ENCODE measurements at regions of chr12 and their contacts with region 1.

Region 1: GRCh38 chr12:130053651-130054069 is 108.6 kb upstream of the FZD10 start:
- DNase-seq: no peak
- H3K4me3 ChIP-seq: no peak overlapping the region
- H3K4me1 ChIP-seq: no peaks in the 10 kb centered on the region
- H3K27me3 ChIP-seq: no peaks in the 10 kb centered on the region

Region 2: GRCh38 chr12:130335517-130336392 is 282.1 kb after region 1 on chr12:
- in situ Hi-C with region 1: loop called (anchors 5 kb)
- DNase-seq: peak; percentile 49 to 65
- H3K4me3 ChIP-seq: no peak overlapping the region
- H3K4me1 ChIP-seq: no peaks in the 10 kb centered on the region
- H3K27me3 ChIP-seq: no peaks in the 10 kb centered on the region